CD14-positive monocyte (primary cell): ENCODE measurements at regions of chr7 and their contacts with region 1.

Region 1: GRCh38 chr7:67729771-67730170 is 733.1 kb downstream of the TYW1 start:
- DNase-seq: no peak
- H3K4me3 ChIP-seq: no peak overlapping the region
- H3K4me3 Mint-ChIP-seq: no peak overlapping the region
- H3K27ac ChIP-seq: no peak overlapping the region
- H3K27ac Mint-ChIP-seq: no peak overlapping the region
- H3K4me1 ChIP-seq: no peaks in the 10 kb centered on the region
- H3K4me1 Mint-ChIP-seq: no peaks in the 10 kb centered on the region
- H3K27me3 ChIP-seq: no peaks in the 10 kb centered on the region
- H3K27me3 Mint-ChIP-seq: peaks cover 0 to 1% (median 0%) of the 10 kb centered on the region in 3 donors
- CTCF ChIP-seq: no peak

Region 2: GRCh38 chr7:67866054-67866453 is 136.3 kb after region 1 on chr7:
- intact Hi-C with region 1: loop called in 1 of 2 experiments (anchors 5 kb)
- DNase-seq: no peak
- H3K4me3 ChIP-seq: no peak overlapping the region
- H3K4me3 Mint-ChIP-seq: no peak overlapping the region
- H3K27ac ChIP-seq: no peak overlapping the region
- H3K27ac Mint-ChIP-seq: no peak overlapping the region
- H3K4me1 ChIP-seq: no peaks in the 10 kb centered on the region
- H3K4me1 Mint-ChIP-seq: no peaks in the 10 kb centered on the region
- H3K27me3 ChIP-seq: no peaks in the 10 kb centered on the region
- H3K27me3 Mint-ChIP-seq: no peaks in the 10 kb centered on the region
- CTCF ChIP-seq: no peak

Region 3: DNA sequence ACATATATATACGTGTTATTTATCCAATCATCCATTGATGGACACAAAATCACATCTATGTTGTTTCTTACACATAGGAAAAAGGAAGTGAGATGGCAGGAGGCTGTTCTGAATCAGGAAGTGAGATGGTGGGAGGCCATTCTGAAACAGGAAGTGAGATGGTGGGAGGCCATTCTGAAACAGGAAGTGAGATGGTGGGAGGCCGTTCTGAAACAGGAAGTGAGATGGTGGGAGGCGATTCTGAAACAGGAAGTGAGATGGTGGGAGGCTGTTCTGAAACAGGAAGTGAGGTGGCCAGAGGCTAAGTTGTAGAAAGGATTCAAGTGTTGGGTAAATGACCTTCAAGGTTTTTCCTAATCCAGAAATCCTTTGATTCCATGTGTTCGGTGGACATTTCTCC is 188.4 kb after region 1 on chr7:
- intact Hi-C with region 1: no loop called
- DNase-seq: peak; percentile 18 to 55 (median 18)
- H3K4me3 ChIP-seq: peak overlapping the region in 1 of 3 experiments; percentile 45
- H3K4me3 Mint-ChIP-seq: no peak overlapping the region
- H3K27ac ChIP-seq: no peak overlapping the region
- H3K27ac Mint-ChIP-seq: peak overlapping the region in 2 of 7 donors; percentile 30 to 69
- H3K4me1 ChIP-seq: no peaks in the 10 kb centered on the region
- H3K4me1 Mint-ChIP-seq: no peaks in the 10 kb centered on the region
- H3K27me3 ChIP-seq: no peaks in the 10 kb centered on the region
- H3K27me3 Mint-ChIP-seq: peaks cover 0 to 2% (median 0%) of the 10 kb centered on the region in 3 donors
- CTCF ChIP-seq: no peak